PC-3 (cell line): ENCODE measurements at regions of chr11 and their contacts with region 1.

Region 1: DNA sequence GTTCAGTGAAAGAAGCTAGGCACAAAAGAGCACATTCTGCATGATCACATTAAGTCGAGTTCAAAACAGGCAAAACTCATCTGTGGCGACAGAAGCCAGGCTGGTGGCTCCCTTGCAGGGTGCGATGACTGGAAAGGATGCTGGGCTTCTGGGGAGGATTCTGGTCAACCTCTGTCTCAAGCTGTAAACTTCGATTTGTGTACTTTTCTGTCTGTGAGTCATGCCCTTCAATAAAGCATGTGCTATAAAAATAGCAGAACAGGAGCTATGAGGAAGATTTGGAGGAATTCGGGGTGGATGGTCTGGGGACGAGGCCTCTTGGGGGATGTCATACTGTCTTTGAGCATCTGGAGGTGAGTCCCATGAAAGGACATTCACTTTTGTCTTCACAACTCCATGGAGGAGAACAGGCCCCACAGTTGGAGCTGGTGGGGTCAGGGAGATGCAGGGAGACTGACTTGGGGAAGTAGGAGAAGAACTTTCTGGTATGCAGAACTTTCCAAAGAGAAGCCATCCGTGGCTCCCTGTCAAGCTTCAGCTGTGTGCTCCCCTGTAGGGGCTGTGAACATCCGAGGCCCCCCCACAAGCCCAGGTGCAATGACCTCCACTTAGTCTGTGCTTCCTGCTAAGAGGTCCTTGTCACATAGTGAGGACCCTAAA is 77.8 kb upstream of the LINC01488 start:
- DNase-seq: peak; percentile 91
- ATAC-seq: peak; percentile 98
- H3K4me3 ChIP-seq: no peak overlapping the region
- H3K27ac ChIP-seq: peak overlapping the region; percentile 19; the same call in 1 of the 2 replicates
- H3K4me1 ChIP-seq: peaks cover 13% of the 10 kb centered on the region
- H3K27me3 ChIP-seq: no peaks in the 10 kb centered on the region
- CTCF ChIP-seq: no peak

Region 2: GRCh38 chr11:68727785-68728184 is 675.9 kb before region 1 on chr11:
- CTCF ChIA-PET with region 1: no interaction called
- POLR2A ChIA-PET with region 1: no interaction called
- intact Hi-C with region 1: no loop called
- DNase-seq: no peak
- ATAC-seq: no peak
- H3K4me3 ChIP-seq: no peak overlapping the region
- H3K27ac ChIP-seq: no peak overlapping the region
- H3K4me1 ChIP-seq: no peaks in the 10 kb centered on the region
- H3K27me3 ChIP-seq: no peaks in the 10 kb centered on the region
- CTCF ChIP-seq: 0 out of 2 replicates have a peak, but pooled peaks have one; percentile 10

Region 3: DNA sequence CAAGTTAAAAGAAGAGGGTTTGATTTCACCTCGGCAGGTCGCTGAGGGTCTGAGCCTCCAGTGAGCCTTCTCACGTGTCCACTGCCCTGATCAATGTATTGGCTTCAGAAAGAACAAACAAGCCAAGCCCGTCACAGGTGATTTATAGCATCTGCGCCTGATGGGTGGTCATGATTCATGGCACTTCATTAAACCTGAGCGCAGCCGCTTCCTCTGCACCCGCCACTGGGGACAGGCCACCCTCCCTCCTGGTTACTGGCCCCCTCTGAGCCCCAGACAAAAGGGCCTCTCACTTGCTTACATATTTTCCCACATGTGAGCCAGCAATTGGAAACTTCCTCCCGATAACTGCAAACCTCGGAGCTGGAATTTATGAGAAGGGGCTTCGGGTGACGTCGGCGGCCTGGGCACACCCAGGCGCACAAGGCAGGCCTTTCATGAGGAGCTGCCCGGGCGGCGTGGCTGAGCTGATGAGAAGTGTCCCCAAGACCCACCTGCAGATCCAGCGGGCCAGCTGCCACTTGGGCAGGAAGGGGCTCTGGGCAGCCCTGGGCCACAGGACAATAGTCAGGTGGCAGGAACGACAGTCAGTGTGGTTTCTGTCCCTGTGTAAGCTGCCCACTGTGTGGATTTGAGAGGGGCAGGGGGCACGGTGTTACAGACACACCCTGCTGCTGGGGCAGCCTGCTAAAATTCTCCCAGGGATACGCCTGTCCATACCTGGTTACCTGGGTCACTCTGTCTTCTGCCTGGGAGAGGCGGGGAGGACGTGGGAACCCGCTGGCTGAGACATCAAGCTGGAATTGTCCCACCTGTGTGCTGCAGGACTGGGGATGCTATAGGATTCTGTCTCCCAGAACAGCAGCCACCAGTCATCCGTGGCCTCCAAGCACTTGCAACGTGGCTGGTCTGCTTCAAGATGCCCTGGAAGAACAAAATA is 13.7 kb after region 1 on chr11:
- CTCF ChIA-PET with region 1: no interaction called
- POLR2A ChIA-PET with region 1: interaction called, 12 read pairs
- intact Hi-C with region 1: no loop called
- DNase-seq: no peak
- ATAC-seq: no peak
- H3K4me3 ChIP-seq: no peak overlapping the region
- H3K27ac ChIP-seq: no peak overlapping the region
- H3K4me1 ChIP-seq: peaks cover 12% of the 10 kb centered on the region
- H3K27me3 ChIP-seq: no peaks in the 10 kb centered on the region
- CTCF ChIP-seq: no peak